ENCODE measurements at regions of chr17 and their contacts with region 1.

Region 1: DNA sequence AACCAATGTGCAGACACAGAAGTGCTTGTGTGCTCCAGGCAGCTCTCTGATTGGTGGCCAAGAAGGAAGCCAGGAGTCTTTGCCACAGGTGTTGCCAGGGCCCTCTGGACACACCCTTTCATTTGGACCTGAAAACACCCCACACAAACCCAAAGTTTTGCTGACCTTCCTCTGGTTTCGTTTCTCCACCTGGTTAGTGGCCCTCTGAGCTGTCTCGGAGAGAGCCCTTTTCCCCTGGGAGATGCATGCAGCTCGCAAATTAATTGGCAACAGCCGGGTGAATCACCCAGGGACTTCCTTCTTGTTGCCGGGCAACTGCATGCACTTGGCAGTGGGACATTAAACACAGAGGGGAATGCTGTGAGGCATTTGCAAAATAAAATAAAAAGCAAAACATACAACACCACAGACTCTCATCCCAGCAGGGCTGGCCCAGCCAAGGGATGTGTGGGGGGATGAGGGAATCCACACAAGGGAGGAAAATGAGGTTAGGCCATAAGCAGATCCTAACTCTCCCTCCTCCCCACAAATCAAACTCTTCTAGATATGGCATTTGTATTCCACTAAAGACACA is 286.6 kb downstream of the SOX9 start:
- DNase-seq: peak; percentile 90
- H3K4me3 Mint-ChIP-seq: peak overlapping the region; percentile 65
- H3K27ac Mint-ChIP-seq: peak overlapping the region; percentile 99
- H3K4me1 Mint-ChIP-seq: peaks cover 92% of the 10 kb centered on the region
- H3K27me3 Mint-ChIP-seq: no peaks in the 10 kb centered on the region
- CTCF ChIP-seq: no peak

Region 2: GRCh38 chr17:72358465-72358864 is 49.0 kb before region 1 on chr17:
- CTCF ChIA-PET with region 1: interaction called, 3 read pairs
- intact Hi-C with region 1: loop called (anchors 2 kb)
- DNase-seq: peak; percentile 22
- H3K4me3 Mint-ChIP-seq: no peak overlapping the region
- H3K27ac Mint-ChIP-seq: peak overlapping the region; percentile 65
- H3K4me1 Mint-ChIP-seq: peaks cover 45% of the 10 kb centered on the region
- H3K27me3 Mint-ChIP-seq: no peaks in the 10 kb centered on the region
- CTCF ChIP-seq: no peak

Region 3: GRCh38 chr17:72456026-72456569 is 48.7 kb after region 1 on chr17:
- CTCF ChIA-PET with region 1: no interaction called
- intact Hi-C with region 1: loop called (anchors 5 kb)
- DNase-seq: peak; percentile 79
- H3K4me3 Mint-ChIP-seq: peak overlapping the region; percentile 18
- H3K27ac Mint-ChIP-seq: no peak overlapping the region
- H3K4me1 Mint-ChIP-seq: peaks cover 77% of the 10 kb centered on the region
- H3K27me3 Mint-ChIP-seq: no peaks in the 10 kb centered on the region
- CTCF ChIP-seq: no peak

Region 4: DNA sequence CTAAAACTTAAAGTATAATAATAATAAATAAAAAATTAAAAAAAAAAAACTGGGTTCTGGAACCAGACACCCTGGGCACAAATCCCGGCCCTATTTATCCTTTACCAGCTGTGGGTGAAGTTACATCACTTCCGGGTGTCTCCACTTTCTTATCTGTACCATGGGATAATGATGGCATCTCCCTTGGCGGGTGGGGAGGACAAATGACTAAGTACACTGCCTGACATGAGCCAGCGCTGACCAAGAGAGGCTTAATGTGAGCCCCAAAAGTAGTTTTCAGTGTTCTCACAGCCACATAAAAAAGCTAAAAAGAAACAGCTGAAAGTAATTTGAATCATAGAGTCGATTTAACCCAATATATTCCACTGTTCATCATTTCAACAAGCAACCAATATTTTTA is 138.3 kb after region 1 on chr17:
- CTCF ChIA-PET with region 1: no interaction called
- intact Hi-C with region 1: no loop called
- DNase-seq: no peak
- H3K4me3 Mint-ChIP-seq: no peak overlapping the region
- H3K27ac Mint-ChIP-seq: no peak overlapping the region
- H3K4me1 Mint-ChIP-seq: peaks cover 8% of the 10 kb centered on the region
- H3K27me3 Mint-ChIP-seq: no peaks in the 10 kb centered on the region
- CTCF ChIP-seq: no peak